ENCODE measurements at regions of chr1 and their contacts with region 1.

Region 1: DNA sequence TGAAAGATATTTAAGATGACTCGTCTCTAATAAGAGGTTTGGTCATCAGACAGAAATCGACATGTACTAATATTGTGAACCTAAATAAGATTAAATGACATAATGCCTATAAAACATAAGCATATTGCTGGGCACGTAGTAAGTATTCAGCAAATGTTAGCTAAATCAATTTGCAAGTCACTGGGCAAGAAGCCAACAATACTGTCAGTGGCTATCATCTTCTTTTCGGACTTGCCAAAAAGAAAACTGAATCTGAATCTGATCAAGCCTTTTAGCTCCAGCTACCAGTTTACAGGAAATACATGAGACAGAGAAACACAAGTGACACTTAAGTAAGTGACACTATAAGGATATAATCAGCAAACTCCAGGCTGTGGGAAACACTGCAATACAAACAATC is 46.0 kb downstream of the RPL5 start:
- H3K4me3 Mint-ChIP-seq: no peak overlapping the region
- H3K27ac Mint-ChIP-seq: no peak overlapping the region
- H3K4me1 Mint-ChIP-seq: peaks cover 7% of the 10 kb centered on the region
- H3K27me3 Mint-ChIP-seq: no peaks in the 10 kb centered on the region

Region 2: DNA sequence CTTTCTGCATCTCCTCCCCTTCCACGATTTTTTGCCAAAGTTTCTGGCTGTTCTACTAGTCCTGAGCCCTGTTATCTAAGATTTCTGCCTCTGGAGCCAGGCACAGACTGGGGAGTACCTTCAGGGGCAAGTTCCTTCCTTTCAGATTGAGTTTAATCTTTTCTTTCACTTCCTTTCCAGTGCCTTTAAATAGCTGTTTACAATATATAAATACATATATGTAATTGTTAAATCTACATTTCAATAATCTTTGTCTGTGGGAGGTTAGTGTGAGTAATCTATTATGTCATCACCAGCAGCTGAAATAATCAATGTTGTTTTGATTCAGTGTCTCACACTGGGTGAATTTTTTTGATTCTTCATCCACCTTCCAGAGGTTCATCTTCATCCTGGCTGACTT is 51.7 kb after region 1 on chr1:
- intact Hi-C with region 1: loop called (anchors 10 kb)
- H3K4me3 Mint-ChIP-seq: no peak overlapping the region
- H3K27ac Mint-ChIP-seq: no peak overlapping the region
- H3K4me1 Mint-ChIP-seq: peaks cover 54% of the 10 kb centered on the region
- H3K27me3 Mint-ChIP-seq: no peaks in the 10 kb centered on the region